ENCODE measurements at regions of chr1 and their contacts with region 1.

Region 1: DNA sequence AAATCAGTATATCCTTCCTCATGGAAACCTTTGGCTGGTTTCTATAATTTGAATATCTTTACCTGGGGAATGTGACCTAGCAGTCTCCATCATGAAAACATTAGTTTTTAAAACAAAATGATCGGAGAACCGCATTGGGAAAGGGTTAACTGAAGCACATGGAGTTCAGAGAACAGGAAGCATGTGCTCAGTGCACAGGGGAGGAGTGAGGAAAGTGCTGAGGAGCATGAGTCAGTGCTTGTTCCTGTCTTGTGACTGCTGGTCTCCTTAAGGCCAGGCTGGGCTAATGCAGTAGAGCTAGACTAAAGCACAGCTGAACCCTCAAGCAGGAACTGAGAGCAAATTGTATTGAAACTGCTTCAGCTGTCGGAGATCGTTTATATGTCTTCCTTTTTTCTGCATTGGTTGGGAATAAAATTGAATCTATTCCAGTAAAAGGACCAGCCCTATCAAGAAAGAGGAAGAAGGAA is 5.8 kb downstream of the IFI16 start:
- DNase-seq: peak; percentile 83
- ATAC-seq: peak; percentile 85
- H3K4me3 Mint-ChIP-seq: peak overlapping the region; percentile 84
- H3K27ac Mint-ChIP-seq: peak overlapping the region; percentile 97
- H3K4me1 Mint-ChIP-seq: peaks cover 38% of the 10 kb centered on the region
- H3K27me3 Mint-ChIP-seq: no peaks in the 10 kb centered on the region
- CTCF ChIP-seq: peak; percentile 13

Region 2: DNA sequence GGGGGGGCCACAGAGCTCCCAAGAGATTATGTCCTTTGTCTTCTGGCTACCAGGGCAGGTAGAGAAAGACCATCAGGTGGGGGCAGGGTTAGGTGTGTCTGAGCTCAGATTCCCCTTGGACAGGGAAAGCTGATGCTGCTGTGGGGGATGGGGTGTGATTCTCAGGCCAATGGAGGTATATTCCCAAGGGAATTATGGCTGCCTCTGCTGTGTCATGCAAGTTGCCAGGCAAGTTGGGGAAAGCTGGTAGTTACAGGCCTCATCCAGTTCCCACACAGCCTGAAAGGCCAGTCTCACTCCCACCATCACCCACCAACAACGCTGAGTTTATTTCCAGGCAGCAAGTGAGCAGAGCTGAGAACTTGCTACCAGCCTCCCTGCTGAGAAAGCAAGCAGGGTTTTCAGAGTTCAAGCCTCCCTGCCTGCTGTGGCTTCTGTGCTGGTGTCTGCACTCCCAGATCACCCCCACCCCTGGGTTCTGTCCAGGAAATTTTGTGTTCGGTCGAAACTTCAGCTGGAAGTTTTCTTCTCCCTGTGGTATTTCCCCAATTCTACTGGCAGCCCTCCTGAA is 15.5 kb after region 1 on chr1:
- CTCF ChIA-PET with region 1: interaction called, 6 read pairs
- POLR2A ChIA-PET with region 1: interaction called, 11 read pairs
- intact Hi-C with region 1: no loop called
- DNase-seq: no peak
- ATAC-seq: no peak
- H3K4me3 Mint-ChIP-seq: no peak overlapping the region
- H3K27ac Mint-ChIP-seq: peak overlapping the region; percentile 67
- H3K4me1 Mint-ChIP-seq: peaks cover 57% of the 10 kb centered on the region
- H3K27me3 Mint-ChIP-seq: no peaks in the 10 kb centered on the region
- CTCF ChIP-seq: no peak

Measured in activated CD8-positive, alpha-beta T cell treated with anti-CD3 and anti-CD28 coated beads for 36 hours (primary cell).